Left lung (tissue), 14 donors: ENCODE measurements at regions of chr1 and their contacts with region 1.

Region 1: GRCh38 chr1:231590453-231591198 is 36.0 kb upstream of the DISC1 start:
- DNase-seq: peak in 3 of 4 donors; percentile 26 to 57 (median 41)
- ATAC-seq: peak; percentile 94
- H3K4me3 ChIP-seq: no peak overlapping the region
- H3K27ac ChIP-seq: no peak overlapping the region
- H3K4me1 ChIP-seq: peaks cover 0 to 6% of the 10 kb centered on the region in 2 donors
- H3K27me3 ChIP-seq: no peaks in the 10 kb centered on the region
- CTCF ChIP-seq: peak; percentile 63 to 68

Region 2: DNA sequence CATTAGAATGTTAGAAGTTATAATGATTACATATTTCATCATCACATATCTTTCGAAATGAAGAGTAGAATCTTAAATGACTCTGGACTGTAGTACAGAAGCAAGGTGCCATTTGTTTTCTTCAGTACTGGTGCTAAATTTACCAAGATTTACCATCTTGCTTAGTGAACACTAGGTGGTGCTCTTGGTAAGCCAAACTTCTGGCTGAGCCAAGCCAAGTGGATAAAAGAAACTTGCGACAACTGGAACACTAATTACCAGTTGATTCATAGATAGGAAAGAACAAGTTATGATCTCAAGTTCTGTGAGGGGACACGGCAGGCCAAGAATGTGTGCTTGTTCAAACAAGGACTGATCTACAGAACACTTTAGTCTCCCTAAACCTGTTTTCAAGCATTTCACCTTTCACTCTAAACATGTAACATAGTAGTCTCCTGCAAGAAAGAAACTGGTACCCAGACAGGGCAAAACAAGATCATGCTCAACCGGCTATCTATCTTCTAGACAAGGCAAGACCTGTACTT is 232.7 kb before region 1 on chr1:
- intact Hi-C with region 1: loop called in 1 of 2 experiments (anchors 5 kb)
- DNase-seq: peak in 2 of 4 donors; percentile 63 to 65
- ATAC-seq: peak; percentile 97
- H3K4me3 ChIP-seq: no peak overlapping the region
- H3K27ac ChIP-seq: no peak overlapping the region
- H3K4me1 ChIP-seq: peaks cover 0 to 14% of the 10 kb centered on the region in 2 donors
- H3K27me3 ChIP-seq: no peaks in the 10 kb centered on the region
- CTCF ChIP-seq: peak; percentile 59 to 65

Region 3: GRCh38 chr1:231493421-231494185 is 97.0 kb before region 1 on chr1:
- intact Hi-C with region 1: no loop called
- DNase-seq: no peak
- ATAC-seq: no peak
- H3K4me3 ChIP-seq: no peak overlapping the region
- H3K27ac ChIP-seq: no peak overlapping the region
- H3K4me1 ChIP-seq: no peaks in the 10 kb centered on the region
- H3K27me3 ChIP-seq: no peaks in the 10 kb centered on the region
- CTCF ChIP-seq: no peak